Mucosa of descending colon (tissue), 3 donors: ENCODE measurements at regions of chr16 and their contacts with region 1.

Region 1: DNA sequence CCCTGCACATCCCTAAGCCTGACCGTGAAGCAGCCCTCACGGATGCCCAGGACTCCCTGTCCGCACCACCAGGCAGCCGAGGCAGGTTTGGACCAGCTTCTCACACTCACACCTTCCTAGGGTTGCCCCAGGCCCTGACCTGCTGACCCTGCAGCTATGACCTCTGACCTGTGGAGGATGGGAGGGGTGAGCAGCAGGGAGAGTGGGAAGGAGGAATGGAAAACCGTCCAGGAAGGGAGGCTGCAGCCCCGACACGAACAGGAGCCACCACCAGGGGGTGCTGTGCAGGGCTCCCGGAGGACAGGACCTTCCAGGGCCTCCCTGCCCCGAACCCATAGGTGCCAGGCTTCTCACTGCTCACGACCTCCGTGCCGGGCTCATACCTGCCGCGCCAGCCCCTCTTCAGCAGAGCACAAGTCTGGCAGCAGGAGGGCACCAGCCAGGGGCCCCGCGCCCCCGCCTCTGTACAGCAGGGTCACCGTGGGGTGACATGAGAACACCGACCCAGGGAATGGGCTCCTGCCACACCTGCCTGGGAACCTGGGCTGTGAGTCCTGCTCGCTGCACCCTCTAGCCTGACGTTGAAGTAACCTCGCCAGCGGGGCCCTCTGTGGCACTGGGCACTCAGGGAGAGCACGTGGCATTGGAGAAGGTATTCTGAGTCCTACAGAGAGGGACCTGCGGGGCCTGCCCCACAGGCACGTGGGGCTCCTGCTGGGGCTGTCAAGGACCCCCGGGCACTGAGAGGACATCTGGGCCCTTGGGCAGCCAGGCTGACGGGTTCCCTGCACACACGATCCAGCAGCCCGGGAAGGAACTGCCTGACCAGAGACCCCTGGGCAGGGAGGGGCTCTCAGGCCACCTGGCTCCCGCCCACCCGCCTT is 37.6 kb downstream of the CTU2 start:
- DNase-seq: peak; percentile 83 to 91 (median 89)
- ATAC-seq: peak; percentile 86
- H3K4me3 ChIP-seq: no peak overlapping the region
- H3K4me1 ChIP-seq: peaks cover 14% of the 10 kb centered on the region
- CTCF ChIP-seq: peak; percentile 92

Region 2: GRCh38 chr16:88784074-88784855 is 40.3 kb after region 1 on chr16:
- intact Hi-C with region 1: loop called in 1 of 2 experiments (anchors 5 kb)
- DNase-seq: peak; percentile 75 to 83 (median 80)
- ATAC-seq: peak; percentile 57
- H3K4me3 ChIP-seq: peak overlapping the region; percentile 63
- H3K4me1 ChIP-seq: peaks cover 46% of the 10 kb centered on the region
- CTCF ChIP-seq: peak; percentile 40

Region 3: DNA sequence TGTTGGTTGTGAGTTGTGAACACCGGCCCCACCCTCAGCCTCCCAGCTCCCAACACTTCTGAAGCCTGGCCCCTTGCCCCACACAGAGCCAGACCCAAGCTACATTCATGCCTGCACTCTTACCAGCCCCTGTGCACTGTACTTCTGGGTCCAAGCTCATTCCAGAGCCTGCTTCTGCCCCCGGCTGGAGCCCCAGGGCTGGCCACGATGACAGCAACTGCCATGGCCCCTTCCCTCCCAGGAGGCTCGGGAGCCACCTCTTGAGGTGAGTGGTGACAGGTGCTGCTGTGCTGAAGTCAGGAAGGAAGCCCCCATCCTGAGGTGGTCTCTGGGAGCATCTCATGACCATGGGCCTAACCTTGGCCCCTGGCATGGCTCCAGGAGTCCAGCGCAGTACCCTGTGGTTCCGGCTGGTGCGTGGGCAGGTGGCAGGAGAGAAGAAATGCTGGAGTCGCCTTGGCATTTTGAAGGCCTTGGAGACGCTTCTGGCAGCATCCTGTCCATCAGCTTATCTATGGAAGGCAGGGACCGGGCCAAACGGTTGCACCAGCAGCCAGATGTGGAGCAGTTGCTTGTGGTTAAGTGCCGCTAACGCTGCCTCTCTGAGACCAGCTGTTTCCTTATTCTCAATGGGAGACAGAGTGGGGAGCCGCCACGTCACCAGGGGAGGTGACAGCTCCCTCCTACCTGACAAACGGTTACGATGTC is 55.8 kb after region 1 on chr16:
- intact Hi-C with region 1: no loop called
- DNase-seq: peak in 1 of 3 donors; percentile 24
- ATAC-seq: no peak
- H3K4me3 ChIP-seq: no peak overlapping the region
- H3K4me1 ChIP-seq: peaks cover 13% of the 10 kb centered on the region
- CTCF ChIP-seq: no peak